ENCODE measurements at regions of chr18 and their contacts with region 1.

Region 1: GRCh38 chr18:7000484-7001096 is 117.0 kb downstream of the LAMA1 start:
- DNase-seq: no peak
- ATAC-seq: no peak
- H3K4me3 ChIP-seq: no peak overlapping the region
- H3K4me3 Mint-ChIP-seq: no peak overlapping the region
- H3K27ac ChIP-seq: no peak overlapping the region
- H3K27ac Mint-ChIP-seq: no peak overlapping the region
- H3K4me1 ChIP-seq: no peaks in the 10 kb centered on the region
- H3K4me1 Mint-ChIP-seq: no peaks in the 10 kb centered on the region
- H3K27me3 ChIP-seq: peaks cover 0 to 4% of the 10 kb centered on the region in 2 experiments
- H3K27me3 Mint-ChIP-seq: no peaks in the 10 kb centered on the region

Region 2: DNA sequence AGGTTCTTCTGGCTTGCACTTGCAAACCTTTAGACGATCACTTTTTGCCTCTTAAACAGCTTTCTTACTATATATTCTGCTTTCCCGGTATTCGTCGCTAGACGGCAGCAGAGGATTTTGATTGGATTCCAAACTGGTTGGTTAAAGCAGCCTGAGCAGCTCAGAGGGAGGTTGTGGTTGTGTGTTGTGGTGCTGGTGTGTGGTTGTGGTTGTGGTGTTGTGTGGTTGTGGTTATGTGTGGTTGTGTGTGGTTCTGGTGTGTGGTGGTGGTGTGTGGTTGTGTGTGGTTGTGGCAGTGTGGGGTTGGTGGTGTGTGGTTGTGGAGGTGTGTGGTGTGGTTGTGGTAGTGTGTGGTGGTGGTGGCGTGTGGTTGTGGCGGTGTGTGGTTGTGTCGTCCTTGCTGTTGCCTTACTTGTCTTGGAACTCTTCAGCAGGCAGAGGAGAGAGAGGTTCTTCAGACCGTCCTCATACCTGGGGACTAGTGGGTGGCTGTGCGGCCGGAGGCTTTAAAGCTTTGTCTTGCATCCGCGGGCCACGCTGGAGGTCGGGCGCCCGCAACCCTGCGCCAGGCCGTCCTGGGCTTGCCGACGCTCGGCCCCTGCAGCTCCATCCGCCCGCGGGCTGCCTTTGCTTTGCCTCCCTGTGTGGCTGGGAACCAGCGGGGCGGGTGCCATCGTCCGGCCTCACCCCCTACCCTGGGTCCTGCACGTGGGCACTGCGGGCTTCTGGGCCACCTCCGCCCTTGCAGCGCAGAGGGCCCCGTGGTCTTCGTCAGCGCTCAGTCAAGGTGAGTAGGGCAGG is 80.3 kb before region 1 on chr18:
- CTCF ChIA-PET with region 1: no interaction called
- POLR2A ChIA-PET with region 1: no interaction called
- DNase-seq: peak in 1 of 35 experiments; percentile 1
- ATAC-seq: no peak
- H3K4me3 ChIP-seq: no peak overlapping the region
- H3K4me3 Mint-ChIP-seq: no peak overlapping the region
- H3K27ac ChIP-seq: no peak overlapping the region
- H3K27ac Mint-ChIP-seq: no peak overlapping the region
- H3K4me1 ChIP-seq: no peaks in the 10 kb centered on the region
- H3K4me1 Mint-ChIP-seq: no peaks in the 10 kb centered on the region
- H3K27me3 ChIP-seq: peaks cover 0 to 4% of the 10 kb centered on the region in 2 experiments
- H3K27me3 Mint-ChIP-seq: no peaks in the 10 kb centered on the region

Region 3: DNA sequence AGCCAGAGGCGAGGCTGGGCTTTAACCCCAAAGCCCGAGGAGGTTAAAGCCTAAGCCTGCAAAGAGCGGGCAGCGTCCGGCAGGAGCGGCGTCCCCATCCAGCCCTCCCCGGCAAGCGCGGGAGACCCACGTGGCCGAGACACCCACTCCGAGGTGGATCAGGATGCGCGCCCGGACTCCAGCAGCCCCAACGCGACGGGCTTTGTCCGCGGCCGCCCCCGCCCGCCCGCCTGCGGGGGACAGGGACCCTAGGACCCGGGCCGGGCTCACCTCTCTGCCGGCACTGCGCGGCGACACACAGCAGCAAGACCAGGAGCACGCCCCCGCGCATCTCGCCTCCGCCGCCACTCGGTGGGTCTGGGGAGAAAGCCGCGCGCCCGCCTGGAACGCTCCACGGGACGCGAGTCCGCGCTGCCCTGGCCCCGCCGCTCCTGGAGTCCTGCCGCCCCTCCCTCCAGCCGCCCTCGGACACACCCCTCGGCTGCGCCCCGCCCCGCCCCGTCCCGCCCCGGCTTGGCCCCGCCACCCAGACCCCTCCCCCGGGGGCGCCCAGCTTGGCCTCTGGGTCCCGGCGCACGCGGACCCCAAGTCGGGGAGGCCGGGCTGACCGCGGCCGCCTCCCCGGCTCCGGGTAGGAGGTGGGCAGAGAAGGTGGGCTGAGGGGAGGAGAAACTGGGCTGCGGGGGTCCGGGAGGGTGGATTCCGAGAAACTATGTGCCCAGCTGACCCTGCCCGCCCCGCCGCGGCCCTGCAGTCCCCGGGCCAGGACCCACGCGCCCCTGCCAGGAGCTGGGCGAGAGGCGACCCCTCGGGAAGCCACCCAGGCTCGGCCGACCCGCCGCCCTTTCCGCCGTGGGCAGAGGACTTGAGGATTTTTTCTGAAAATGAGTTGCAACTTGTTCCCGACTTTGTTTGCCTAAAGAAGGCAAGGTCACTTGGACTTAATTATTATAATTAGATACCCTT is 117.1 kb after region 1 on chr18 and contains the start of gene LAMA1:
- CTCF ChIA-PET with region 1: no interaction called
- POLR2A ChIA-PET with region 1: no interaction called
- DNase-seq: no peak
- ATAC-seq: peak in 1 of 4 experiments; percentile 17
- H3K4me3 ChIP-seq: peak within 1 kb of the TSS in 1 of 2 donors; percentile 69
- H3K4me3 Mint-ChIP-seq: peak within 1 kb of the TSS in 1 of 3 donors; percentile 26
- H3K27ac ChIP-seq: no peak within 1 kb of the TSS
- H3K27ac Mint-ChIP-seq: no peak within 1 kb of the TSS
- H3K4me1 ChIP-seq: peaks cover 0 to 5% of the 10 kb centered on the region in 2 experiments
- H3K4me1 Mint-ChIP-seq: peaks cover 8 to 9% (median 9%) of the 10 kb centered on the region in 3 donors
- H3K27me3 ChIP-seq: peaks cover 12 to 27% of the 10 kb centered on the region in 2 experiments
- H3K27me3 Mint-ChIP-seq: peaks cover 39 to 43% of the 10 kb centered on the region in 2 donors
- total RNA-seq, gene LAMA1: 0.09 to 0.43 (median 0.09) TPM in 3 of 5 donors, not detected in the others

Region 4: GRCh38 chr18:8519102-8519501 is 1518.5 kb after region 1 on chr18:
- CTCF ChIA-PET with region 1: no interaction called
- POLR2A ChIA-PET with region 1: interaction called in 1 of 2 experiments, 10 read pairs
- DNase-seq: no peak
- ATAC-seq: no peak
- H3K4me3 ChIP-seq: no peak overlapping the region
- H3K4me3 Mint-ChIP-seq: no peak overlapping the region
- H3K27ac ChIP-seq: no peak overlapping the region
- H3K27ac Mint-ChIP-seq: no peak overlapping the region
- H3K4me1 ChIP-seq: no peaks in the 10 kb centered on the region
- H3K4me1 Mint-ChIP-seq: no peaks in the 10 kb centered on the region
- H3K27me3 ChIP-seq: peaks cover 0 to 15% of the 10 kb centered on the region in 2 experiments
- H3K27me3 Mint-ChIP-seq: peaks cover 16 to 19% of the 10 kb centered on the region in 2 donors

Measured in T-cell (primary cell).